ENCODE measurements at regions of chr2 and their contacts with region 1.

Region 1: GRCh38 chr2:191459158-191459557 is 214.0 kb downstream of the MYO1B start:
- DNase-seq: no peak
- H3K4me3 ChIP-seq: no peak overlapping the region
- H3K27ac ChIP-seq: no peak overlapping the region
- H3K4me1 ChIP-seq: no peaks in the 10 kb centered on the region
- H3K27me3 ChIP-seq: no peaks in the 10 kb centered on the region
- CTCF ChIP-seq: no peak
- POLR2A ChIP-seq: no peak

Region 2: DNA sequence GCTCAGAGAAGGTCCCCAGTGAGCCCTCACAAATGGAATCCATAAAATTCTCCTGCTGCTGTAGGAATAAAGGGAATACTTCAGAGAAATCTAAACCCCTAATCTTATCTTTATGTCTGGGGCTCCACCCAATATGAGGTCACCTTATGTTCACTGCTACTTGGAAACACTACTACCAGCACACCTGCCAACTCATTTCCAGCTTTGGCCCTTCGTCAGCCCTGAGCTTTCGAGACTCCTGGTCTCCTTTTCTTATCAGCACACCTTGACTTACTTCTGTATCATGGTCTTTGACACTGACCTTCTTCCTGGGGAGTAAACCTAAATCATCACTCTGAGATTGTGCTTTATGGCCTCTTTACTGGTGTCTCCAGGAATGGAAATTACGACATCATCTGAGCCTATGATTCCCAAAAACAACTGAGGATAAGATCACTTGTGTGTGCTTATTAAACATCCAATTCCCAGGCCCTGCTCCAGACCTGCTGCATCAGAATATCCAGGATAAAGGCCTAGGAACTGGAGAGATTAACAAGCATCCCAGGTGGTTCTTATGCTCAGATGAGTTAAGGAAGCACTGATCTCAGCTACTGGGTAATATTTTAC is 1820.1 kb before region 1 on chr2:
- intact Hi-C with region 1: loop called (anchors 5 kb)
- DNase-seq: no peak
- H3K4me3 ChIP-seq: no peak overlapping the region
- H3K27ac ChIP-seq: no peak overlapping the region
- H3K4me1 ChIP-seq: no peaks in the 10 kb centered on the region
- H3K27me3 ChIP-seq: no peaks in the 10 kb centered on the region
- CTCF ChIP-seq: no peak
- POLR2A ChIP-seq: no peak

Region 3: GRCh38 chr2:191421950-191422349 is 37.2 kb before region 1 on chr2:
- intact Hi-C with region 1: no loop called
- DNase-seq: no peak
- H3K4me3 ChIP-seq: no peak overlapping the region
- H3K27ac ChIP-seq: no peak overlapping the region
- H3K4me1 ChIP-seq: no peaks in the 10 kb centered on the region
- H3K27me3 ChIP-seq: no peaks in the 10 kb centered on the region
- CTCF ChIP-seq: no peak
- POLR2A ChIP-seq: no peak

Region 4: GRCh38 chr2:191991442-191991841 is 532.3 kb after region 1 on chr2:
- intact Hi-C with region 1: no loop called
- DNase-seq: no peak
- H3K4me3 ChIP-seq: no peak overlapping the region
- H3K27ac ChIP-seq: no peak overlapping the region
- H3K4me1 ChIP-seq: no peaks in the 10 kb centered on the region
- H3K27me3 ChIP-seq: no peaks in the 10 kb centered on the region
- CTCF ChIP-seq: no peak
- POLR2A ChIP-seq: no peak